ENCODE measurements at regions of chr10 and their contacts with region 1.

Region 1: GRCh38 chr10:110671788-110672579 is 27.8 kb downstream of the RBM20 start:
- DNase-seq: peak; percentile 31 to 66 (median 59)
- ATAC-seq: peak; percentile 97
- H3K4me3 ChIP-seq: peak overlapping the region; percentile 88
- H3K4me3 Mint-ChIP-seq: peak overlapping the region; percentile 80 to 94 (median 91)
- H3K27ac ChIP-seq: peak overlapping the region; percentile 70
- H3K27ac Mint-ChIP-seq: peak overlapping the region in 8 of 9 donors; percentile 34 to 90 (median 82)
- H3K4me1 ChIP-seq: peaks cover 0 to 3% of the 10 kb centered on the region in 2 donors
- H3K4me1 Mint-ChIP-seq: peaks cover 0 to 12% (median 4%) of the 10 kb centered on the region in 7 donors
- H3K27me3 ChIP-seq: no peaks in the 10 kb centered on the region
- H3K27me3 Mint-ChIP-seq: peaks cover 0 to 77% (median 0%) of the 10 kb centered on the region in 5 donors

Region 2: GRCh38 chr10:110643653-110644597 is 28.1 kb before region 1 on chr10 and contains the start of gene RBM20:
- CTCF ChIA-PET with region 1: interaction called, 3 read pairs
- POLR2A ChIA-PET with region 1: no interaction called
- intact Hi-C with region 1: loop called in 1 of 2 experiments (anchors 2 kb)
- DNase-seq: peak in 8 of 9 donors; percentile 11 to 35 (median 19)
- ATAC-seq: peak; percentile 55
- H3K4me3 ChIP-seq: peak within 1 kb of the TSS; percentile 47
- H3K4me3 Mint-ChIP-seq: peak within 1 kb of the TSS; percentile 68 to 87 (median 80)
- H3K27ac ChIP-seq: no peak within 1 kb of the TSS
- H3K27ac Mint-ChIP-seq: peak within 1 kb of the TSS in 1 of 9 donors; percentile 38
- H3K4me1 ChIP-seq: peaks cover 10 to 14% of the 10 kb centered on the region in 2 donors
- H3K4me1 Mint-ChIP-seq: peaks cover 10 to 36% (median 25%) of the 10 kb centered on the region in 7 donors
- H3K27me3 ChIP-seq: peaks cover 0 to 23% of the 10 kb centered on the region in 2 donors
- H3K27me3 Mint-ChIP-seq: peaks cover 51 to 79% (median 64%) of the 10 kb centered on the region in 5 donors
- total RNA-seq, gene RBM20: 0.16 to 1.7 (median 0.40) TPM

Region 3: DNA sequence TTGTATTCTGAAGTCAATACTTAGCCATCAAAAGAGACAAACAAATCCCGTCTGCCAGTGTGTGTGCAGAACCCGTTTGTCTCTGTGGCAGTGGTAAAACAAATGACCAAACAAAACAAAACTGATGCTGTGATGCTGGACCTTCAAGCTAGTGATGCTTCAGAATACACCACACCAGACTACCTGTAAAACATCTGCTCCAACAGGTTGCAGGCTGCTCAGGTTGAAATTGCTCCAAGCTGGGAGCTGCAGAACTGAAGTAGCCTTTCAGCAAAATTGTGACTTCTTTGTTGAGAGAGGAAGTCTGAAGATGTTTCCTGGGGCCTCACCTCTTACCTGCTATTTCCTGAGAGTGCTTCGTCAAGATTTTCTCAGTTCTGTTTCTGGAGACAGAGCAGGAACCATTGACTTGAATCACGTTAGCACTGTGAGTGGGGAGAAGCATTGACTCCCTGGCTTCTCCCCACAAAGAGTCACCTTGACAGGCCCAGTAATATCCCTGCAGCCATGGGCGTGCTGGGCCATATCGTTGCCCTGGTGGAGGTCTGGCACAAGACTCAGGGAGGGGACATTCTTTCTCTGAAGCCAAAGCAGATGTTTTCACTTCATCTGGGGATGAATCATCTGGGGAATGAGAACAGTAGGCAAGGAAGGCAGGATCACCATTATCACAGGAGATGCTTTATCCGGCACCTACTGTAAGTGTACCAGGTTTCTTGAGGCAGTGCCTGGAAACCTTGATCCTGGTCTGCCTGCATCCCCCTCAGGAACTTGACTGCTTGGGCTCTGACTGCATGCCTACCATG is 52.3 kb after region 1 on chr10:
- CTCF ChIA-PET with region 1: no interaction called
- POLR2A ChIA-PET with region 1: no interaction called
- intact Hi-C with region 1: loop called in 1 of 2 experiments (anchors 1 kb)
- DNase-seq: peak in 5 of 9 donors; percentile 32 to 42 (median 38)
- ATAC-seq: peak; percentile 53
- H3K4me3 ChIP-seq: peak overlapping the region; percentile 14
- H3K4me3 Mint-ChIP-seq: peak overlapping the region; percentile 34 to 81 (median 69)
- H3K27ac ChIP-seq: peak overlapping the region; percentile 61
- H3K27ac Mint-ChIP-seq: peak overlapping the region in 8 of 9 donors; percentile 69 to 96 (median 88)
- H3K4me1 ChIP-seq: peaks cover 14 to 34% of the 10 kb centered on the region in 2 donors
- H3K4me1 Mint-ChIP-seq: peaks cover 25 to 56% (median 44%) of the 10 kb centered on the region in 7 donors
- H3K27me3 ChIP-seq: no peaks in the 10 kb centered on the region
- H3K27me3 Mint-ChIP-seq: peaks cover 0 to 2% (median 0%) of the 10 kb centered on the region in 5 donors

Region 4: GRCh38 chr10:110893559-110894179 is 221.7 kb after region 1 on chr10:
- CTCF ChIA-PET with region 1: interaction called, 3 read pairs
- POLR2A ChIA-PET with region 1: no interaction called
- intact Hi-C with region 1: loop called in 1 of 2 experiments (anchors 2 kb)
- DNase-seq: peak in 6 of 9 donors; percentile 47 to 75 (median 66)
- ATAC-seq: peak; percentile 91
- H3K4me3 ChIP-seq: no peak overlapping the region
- H3K4me3 Mint-ChIP-seq: peak overlapping the region in 3 of 10 donors; percentile 2 to 34 (median 6)
- H3K27ac ChIP-seq: peak overlapping the region; percentile 56
- H3K27ac Mint-ChIP-seq: peak overlapping the region in 7 of 9 donors; percentile 2 to 68 (median 32)
- H3K4me1 ChIP-seq: peaks cover 0 to 20% of the 10 kb centered on the region in 2 donors
- H3K4me1 Mint-ChIP-seq: peaks cover 10 to 66% (median 51%) of the 10 kb centered on the region in 7 donors
- H3K27me3 ChIP-seq: no peaks in the 10 kb centered on the region
- H3K27me3 Mint-ChIP-seq: no peaks in the 10 kb centered on the region

Region 5: DNA sequence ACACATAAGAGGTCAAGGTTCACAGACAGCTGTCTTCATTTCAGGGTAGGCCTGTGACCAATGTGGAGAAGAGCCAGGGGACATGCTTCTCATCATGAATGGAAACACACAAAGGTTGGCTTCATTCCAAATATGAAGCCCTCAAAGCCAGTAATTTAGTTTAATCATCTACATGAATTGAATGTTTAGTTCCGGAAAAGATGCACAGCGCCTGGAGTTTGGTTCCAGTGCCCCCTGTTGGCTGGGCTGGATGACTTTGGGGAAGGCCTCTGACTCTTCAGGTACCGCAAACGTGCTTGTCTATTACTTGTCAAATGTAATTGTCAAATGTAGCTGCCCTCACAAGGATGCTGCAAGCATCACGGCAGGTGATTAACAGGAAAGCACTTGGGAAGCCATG is 535.5 kb after region 1 on chr10:
- CTCF ChIA-PET with region 1: no interaction called
- POLR2A ChIA-PET with region 1: no interaction called
- intact Hi-C with region 1: loop called in 1 of 2 experiments (anchors 2 kb)
- DNase-seq: peak in 5 of 9 donors; percentile 1 to 19 (median 12)
- ATAC-seq: no peak
- H3K4me3 ChIP-seq: no peak overlapping the region
- H3K4me3 Mint-ChIP-seq: no peak overlapping the region
- H3K27ac ChIP-seq: no peak overlapping the region
- H3K27ac Mint-ChIP-seq: no peak overlapping the region
- H3K4me1 ChIP-seq: no peaks in the 10 kb centered on the region
- H3K4me1 Mint-ChIP-seq: no peaks in the 10 kb centered on the region
- H3K27me3 ChIP-seq: no peaks in the 10 kb centered on the region
- H3K27me3 Mint-ChIP-seq: peaks cover 0 to 16% (median 11%) of the 10 kb centered on the region in 5 donors

Region 6: GRCh38 chr10:111598436-111599059 is 926.6 kb after region 1 on chr10:
- CTCF ChIA-PET with region 1: no interaction called
- POLR2A ChIA-PET with region 1: no interaction called
- intact Hi-C with region 1: loop called in 1 of 2 experiments (anchors 5 kb)
- DNase-seq: peak in 8 of 9 donors; percentile 1 to 47 (median 30)
- ATAC-seq: peak; percentile 62
- H3K4me3 ChIP-seq: no peak overlapping the region
- H3K4me3 Mint-ChIP-seq: no peak overlapping the region
- H3K27ac ChIP-seq: no peak overlapping the region
- H3K27ac Mint-ChIP-seq: no peak overlapping the region
- H3K4me1 ChIP-seq: no peaks in the 10 kb centered on the region
- H3K4me1 Mint-ChIP-seq: no peaks in the 10 kb centered on the region
- H3K27me3 ChIP-seq: no peaks in the 10 kb centered on the region
- H3K27me3 Mint-ChIP-seq: peaks cover 0 to 21% (median 12%) of the 10 kb centered on the region in 5 donors

Measured in naive thymus-derived CD4-positive, alpha-beta T cell (primary cell).